Calu3 (cell line): ENCODE measurements at regions of chr4 and their contacts with region 1.

Region 1: GRCh38 chr4:161252520-161253141 is 911.2 kb downstream of the FSTL5 start:
- DNase-seq: peak; percentile 10
- H3K4me3 Mint-ChIP-seq: no peak overlapping the region
- H3K27ac Mint-ChIP-seq: no peak overlapping the region
- H3K4me1 Mint-ChIP-seq: no peaks in the 10 kb centered on the region
- H3K27me3 Mint-ChIP-seq: no peaks in the 10 kb centered on the region
- CTCF ChIP-seq: peak; percentile 40

Region 2: DNA sequence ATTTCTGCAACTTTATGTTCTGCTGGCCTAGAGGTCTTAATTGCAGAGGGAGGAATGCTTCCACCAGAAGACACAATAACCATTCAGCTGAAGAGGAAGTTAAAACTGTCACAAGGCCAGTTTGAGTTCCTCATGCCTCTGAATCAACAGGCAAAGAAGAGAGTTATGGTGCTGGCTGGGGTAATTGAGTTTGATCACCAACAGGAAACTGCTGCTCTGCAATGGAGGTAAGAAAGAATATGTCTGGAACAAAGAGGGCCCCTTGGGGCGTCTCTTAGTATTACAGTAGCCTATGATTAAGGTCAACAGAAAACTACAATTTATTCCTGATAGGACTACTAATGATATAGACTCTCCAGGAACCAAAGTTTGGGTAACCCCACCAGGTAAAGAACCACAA is 167.2 kb after region 1 on chr4:
- CTCF ChIA-PET with region 1: no interaction called
- intact Hi-C with region 1: loop called (anchors 10 kb)
- DNase-seq: peak; percentile 37
- H3K4me3 Mint-ChIP-seq: no peak overlapping the region
- H3K27ac Mint-ChIP-seq: no peak overlapping the region
- H3K4me1 Mint-ChIP-seq: no peaks in the 10 kb centered on the region
- H3K27me3 Mint-ChIP-seq: no peaks in the 10 kb centered on the region
- CTCF ChIP-seq: no peak

Region 3: DNA sequence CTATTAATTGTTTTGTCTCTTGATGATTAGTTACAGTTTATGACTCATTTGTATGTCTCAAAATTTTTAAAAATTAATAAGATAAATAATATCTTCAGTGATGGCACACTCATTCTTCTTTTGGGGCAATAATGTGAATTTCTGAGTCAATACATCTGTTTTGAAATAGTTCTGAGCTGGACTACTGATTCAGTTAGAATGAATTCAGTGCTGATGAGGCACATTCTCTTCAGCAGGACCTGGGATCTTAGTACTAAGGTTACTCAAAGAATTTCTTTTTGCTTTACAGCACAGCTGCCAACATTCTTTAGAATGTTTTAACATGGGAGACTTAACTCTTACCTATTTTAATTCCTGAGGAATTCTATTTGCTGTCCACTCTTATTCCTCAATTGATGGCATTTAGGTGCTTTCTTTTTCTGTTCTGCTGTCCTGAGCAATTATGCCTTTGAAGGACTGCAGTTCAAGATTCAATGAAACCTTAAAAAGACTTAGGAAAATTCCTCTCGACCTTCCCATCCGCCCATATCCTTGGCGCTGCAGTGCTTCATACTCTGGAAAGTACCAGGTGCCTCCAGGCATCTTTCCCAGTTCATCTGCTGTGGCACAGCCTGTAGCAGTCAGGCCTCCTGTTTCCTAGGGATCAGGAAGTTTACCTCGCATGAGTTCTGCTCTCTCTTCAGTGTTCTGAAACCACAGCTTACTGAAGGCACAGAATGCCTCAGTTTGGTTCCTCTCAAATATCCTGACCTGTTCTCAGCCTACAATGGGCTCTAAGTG is 697.5 kb after region 1 on chr4:
- CTCF ChIA-PET with region 1: no interaction called
- intact Hi-C with region 1: loop called (anchors 10 kb)
- DNase-seq: no peak
- H3K4me3 Mint-ChIP-seq: no peak overlapping the region
- H3K27ac Mint-ChIP-seq: no peak overlapping the region
- H3K4me1 Mint-ChIP-seq: no peaks in the 10 kb centered on the region
- H3K27me3 Mint-ChIP-seq: no peaks in the 10 kb centered on the region
- CTCF ChIP-seq: no peak